ENCODE measurements at regions of chr12 and their contacts with region 1.

Region 1: GRCh38 chr12:103632554-103633216 is 45.6 kb downstream of the STAB2 start:
- DNase-seq: peak; percentile 87
- CTCF ChIP-seq: peak; percentile 98

Region 2: DNA sequence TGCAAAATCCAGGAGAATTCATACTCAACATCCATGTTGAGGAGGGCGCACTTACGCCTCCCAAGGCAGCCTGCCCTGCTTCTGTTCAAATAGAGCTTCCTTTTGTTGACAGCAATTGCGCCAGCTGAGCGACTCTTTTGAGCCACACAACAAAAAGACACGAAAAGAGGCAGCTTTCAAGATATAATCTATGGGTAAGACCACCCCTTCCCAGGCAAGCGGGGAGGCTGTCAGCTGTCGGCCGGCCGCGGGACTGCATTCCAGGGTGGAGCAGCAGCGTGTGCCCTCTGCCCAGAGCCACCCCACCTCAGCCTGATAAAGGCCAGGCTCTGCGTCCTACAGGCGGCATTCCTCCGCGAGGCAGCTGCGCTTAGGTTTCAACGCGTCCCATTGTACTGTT is 61.4 kb before region 1 on chr12:
- CTCF ChIA-PET with region 1: interaction called, 15 read pairs
- POLR2A ChIA-PET with region 1: no interaction called
- DNase-seq: no peak
- CTCF ChIP-seq: no peak

Region 3: GRCh38 chr12:103583004-103583403 is 49.7 kb before region 1 on chr12:
- CTCF ChIA-PET with region 1: interaction called, 23 read pairs
- POLR2A ChIA-PET with region 1: no interaction called
- DNase-seq: no peak
- CTCF ChIP-seq: no peak

Region 4: GRCh38 chr12:103647267-103647666 is 14.6 kb after region 1 on chr12:
- CTCF ChIA-PET with region 1: interaction called, 43 read pairs
- POLR2A ChIA-PET with region 1: no interaction called
- DNase-seq: no peak
- CTCF ChIP-seq: no peak

Measured in GM10248 (cell line).